Panc1 (cell line): ENCODE measurements at regions of chr6 and their contacts with region 1.

Region 1: GRCh38 chr6:31399589-31400466 is 3.6 kb upstream of the MICA start:
- DNase-seq: peak; percentile 75
- ATAC-seq: peak; percentile 70
- H3K4me3 ChIP-seq: peak overlapping the region; percentile 71 to 75
- H3K27ac ChIP-seq: peak overlapping the region; percentile 96
- H3K4me1 ChIP-seq: peaks cover 5% of the 10 kb centered on the region
- H3K27me3 ChIP-seq: no peaks in the 10 kb centered on the region
- CTCF ChIP-seq: peak; percentile 96

Region 2: DNA sequence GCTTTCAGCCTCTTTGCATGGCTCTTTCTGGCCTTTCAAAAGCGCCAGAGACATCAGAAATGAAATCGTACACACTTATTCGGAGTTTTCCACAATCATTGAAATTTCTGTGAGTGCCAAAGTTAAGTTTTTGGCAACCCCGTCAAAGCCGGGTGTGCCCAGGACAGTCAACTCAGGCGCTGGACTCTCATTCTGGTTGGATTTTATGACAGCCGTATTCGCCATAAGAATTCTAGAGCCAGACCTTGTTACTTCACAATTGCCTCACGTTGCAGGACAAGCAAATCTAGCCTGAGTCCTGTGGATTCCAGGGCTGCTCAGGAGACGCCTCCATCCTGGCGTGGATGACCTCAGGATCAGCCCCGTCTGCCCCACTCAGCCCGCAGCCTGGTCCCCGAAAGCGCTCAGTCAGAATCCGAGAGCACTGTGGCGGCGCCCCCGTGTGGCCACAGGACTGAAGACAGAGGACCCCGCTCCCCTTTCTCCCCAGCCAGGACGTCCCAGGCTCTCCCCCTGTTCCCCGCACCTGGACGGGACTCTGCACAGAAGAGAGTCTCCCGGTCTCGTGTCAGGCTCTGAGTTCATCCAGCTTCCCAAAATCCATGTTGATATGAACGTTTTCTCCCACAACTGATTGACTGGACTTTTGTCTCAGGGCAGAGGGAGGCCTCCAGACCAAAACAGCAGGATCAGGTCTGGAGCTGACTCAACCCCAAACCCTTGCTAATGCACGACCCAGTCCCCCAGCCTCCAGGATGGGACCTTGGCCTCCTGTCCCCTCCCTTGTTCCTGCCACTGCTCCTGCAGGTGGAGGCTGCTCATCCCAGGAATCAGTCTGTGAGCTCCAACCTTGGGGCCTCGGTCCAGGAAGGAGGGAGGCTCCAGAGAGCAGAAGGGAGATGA is 41.8 kb after region 1 on chr6:
- CTCF ChIA-PET with region 1: interaction called, 28 read pairs
- POLR2A ChIA-PET with region 1: no interaction called
- in situ Hi-C with region 1: no loop called
- intact Hi-C with region 1: loop called (anchors 2 kb)
- DNase-seq: peak; percentile 39
- ATAC-seq: peak; percentile 96
- H3K4me3 ChIP-seq: peak overlapping the region; percentile 20 to 39; a peak in 3 of 4 replicates
- H3K27ac ChIP-seq: no peak overlapping the region
- H3K4me1 ChIP-seq: peaks cover 4% of the 10 kb centered on the region
- H3K27me3 ChIP-seq: no peaks in the 10 kb centered on the region; the same call in 1 of the 2 replicates
- CTCF ChIP-seq: peak; percentile 94

Region 3: GRCh38 chr6:31453259-31453658 is 53.4 kb after region 1 on chr6:
- CTCF ChIA-PET with region 1: interaction called, 3 read pairs
- POLR2A ChIA-PET with region 1: interaction called, 14 read pairs
- in situ Hi-C with region 1: no loop called
- intact Hi-C with region 1: no loop called
- DNase-seq: no peak
- ATAC-seq: no peak
- H3K4me3 ChIP-seq: no peak overlapping the region
- H3K27ac ChIP-seq: no peak overlapping the region
- H3K4me1 ChIP-seq: no peaks in the 10 kb centered on the region
- H3K27me3 ChIP-seq: peaks cover 6% of the 10 kb centered on the region; the same call in 1 of the 2 replicates
- CTCF ChIP-seq: no peak